ENCODE measurements at regions of chr20 and their contacts with region 1.

Region 1: DNA sequence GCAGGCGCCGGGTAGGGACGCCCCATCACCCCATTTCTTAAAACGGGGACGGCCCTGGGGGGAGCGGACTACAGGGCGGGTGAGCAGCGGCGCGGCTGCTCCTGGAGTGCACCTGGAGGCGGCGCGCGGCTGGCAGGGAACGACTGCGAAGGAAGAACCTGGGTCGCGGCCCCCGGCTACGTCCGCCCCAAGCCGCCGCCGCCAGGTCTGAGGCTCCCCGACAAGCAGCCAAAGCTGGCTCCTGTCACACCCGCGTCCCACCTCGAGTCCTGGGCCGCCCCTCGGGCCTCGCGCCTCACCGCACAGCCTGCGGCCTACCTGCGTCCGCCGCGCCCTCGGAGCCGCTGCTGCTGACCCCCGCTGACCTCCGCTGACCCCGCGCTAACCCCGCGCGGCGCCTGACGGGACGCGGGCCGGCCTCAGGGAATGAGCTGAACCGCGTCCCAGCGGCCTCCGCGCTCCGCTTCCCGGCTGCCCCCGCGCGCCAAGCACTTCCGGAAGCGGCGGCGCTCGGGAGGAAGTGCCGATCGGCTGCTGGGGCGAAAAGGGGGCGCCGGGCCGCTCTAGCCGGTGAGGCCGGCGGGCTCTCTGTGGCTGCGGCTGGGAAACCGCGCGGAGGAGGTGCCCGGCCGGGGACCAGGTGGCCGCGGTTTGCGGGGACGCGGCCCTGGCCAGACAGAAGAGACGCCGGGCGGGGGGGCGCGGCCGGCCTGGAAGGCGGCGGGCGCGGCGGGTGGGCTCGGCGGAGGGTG is at the starts of genes ARFRP1 and ZGPAT:
- DNase-seq: peak; percentile 82
- H3K4me3 Mint-ChIP-seq: peak within 1 kb of the TSS; percentile 86
- H3K27ac Mint-ChIP-seq: peak within 1 kb of the TSS; percentile 61
- H3K4me1 Mint-ChIP-seq: peaks cover 9% of the 10 kb centered on the region
- H3K27me3 Mint-ChIP-seq: no peaks in the 10 kb centered on the region
- CTCF ChIP-seq: no peak
- total RNA-seq, gene ARFRP1: 60.1 and 65.4 TPM in 2 replicates
- total RNA-seq, gene ZGPAT: 19.5 and 22.2 TPM in 2 replicates

Region 2: GRCh38 chr20:63627129-63627750 is 80.5 kb before region 1 on chr20:
- CTCF ChIA-PET with region 1: interaction called, 4 read pairs
- POLR2A ChIA-PET with region 1: interaction called, 23 read pairs
- intact Hi-C with region 1: no loop called
- DNase-seq: peak; percentile 93
- H3K4me3 Mint-ChIP-seq: peak overlapping the region; percentile 79
- H3K27ac Mint-ChIP-seq: peak overlapping the region; percentile 88
- H3K4me1 Mint-ChIP-seq: peaks cover 7% of the 10 kb centered on the region
- H3K27me3 Mint-ChIP-seq: no peaks in the 10 kb centered on the region
- CTCF ChIP-seq: no peak

Region 3: DNA sequence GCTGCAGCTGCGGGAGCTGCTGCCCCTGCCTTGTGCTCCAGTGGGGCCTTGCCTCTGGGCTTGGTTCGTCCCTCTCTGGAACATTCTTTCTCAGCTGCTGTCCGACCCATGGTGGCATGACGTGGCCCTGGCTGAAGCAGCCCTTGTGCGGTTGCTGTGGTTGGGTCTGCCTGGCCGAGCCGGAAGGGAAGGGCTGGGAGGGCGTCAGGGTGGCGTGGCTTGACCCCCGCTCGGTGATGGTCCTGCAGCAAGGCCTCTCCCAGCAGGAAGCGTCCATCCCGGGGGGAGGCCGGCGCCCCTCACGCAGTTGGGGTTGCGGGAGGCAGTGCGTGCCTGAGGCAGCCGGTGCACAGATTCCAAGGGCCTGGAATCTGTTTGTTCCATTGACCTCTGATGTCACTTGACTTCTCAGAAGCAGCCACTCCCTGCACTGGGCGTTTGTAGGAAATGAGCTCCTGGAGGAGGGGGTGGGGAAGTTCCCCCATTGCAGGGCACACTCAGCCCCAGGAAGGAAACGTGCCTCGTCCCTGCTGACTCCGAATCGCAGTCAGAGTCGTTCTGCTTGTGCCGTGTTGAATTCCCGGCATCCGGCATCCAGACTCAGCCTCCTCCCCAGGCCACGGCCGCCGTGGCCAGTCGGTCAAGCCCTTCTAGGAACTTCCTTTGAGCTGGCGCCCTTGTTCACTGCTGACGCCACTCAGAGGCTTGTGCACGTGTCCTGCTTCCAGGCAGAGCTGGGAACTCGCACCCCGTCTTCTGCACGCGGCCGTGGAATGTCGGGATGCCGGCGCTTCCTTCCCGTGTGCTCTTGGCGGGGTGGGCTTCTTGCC is 21.0 kb before region 1 on chr20:
- CTCF ChIA-PET with region 1: no interaction called
- POLR2A ChIA-PET with region 1: interaction called, 21 read pairs
- intact Hi-C with region 1: no loop called
- DNase-seq: peak; percentile 85
- H3K4me3 Mint-ChIP-seq: no peak overlapping the region
- H3K27ac Mint-ChIP-seq: no peak overlapping the region
- H3K4me1 Mint-ChIP-seq: peaks cover 12% of the 10 kb centered on the region
- H3K27me3 Mint-ChIP-seq: no peaks in the 10 kb centered on the region
- CTCF ChIP-seq: no peak

Region 4: GRCh38 chr20:63739130-63740069 is 31.7 kb after region 1 on chr20 and contains the start of gene SLC2A4RG:
- CTCF ChIA-PET with region 1: interaction called, 9 read pairs
- POLR2A ChIA-PET with region 1: interaction called, 79 read pairs
- intact Hi-C with region 1: no loop called
- DNase-seq: peak; percentile 76
- H3K4me3 Mint-ChIP-seq: peak within 1 kb of the TSS; percentile 74
- H3K27ac Mint-ChIP-seq: no peak within 1 kb of the TSS
- H3K4me1 Mint-ChIP-seq: no peaks in the 10 kb centered on the region
- H3K27me3 Mint-ChIP-seq: no peaks in the 10 kb centered on the region
- CTCF ChIP-seq: no peak
- total RNA-seq, gene SLC2A4RG: 85.0 and 105 TPM in 2 replicates

Region 5: GRCh38 chr20:63955827-63956663 is 248.3 kb after region 1 on chr20 and contains the start of gene UCKL1:
- CTCF ChIA-PET with region 1: interaction called, 4 read pairs
- POLR2A ChIA-PET with region 1: interaction called, 16 read pairs
- intact Hi-C with region 1: loop called (anchors 5 kb)
- DNase-seq: peak; percentile 81
- H3K4me3 Mint-ChIP-seq: peak within 1 kb of the TSS; percentile 74
- H3K27ac Mint-ChIP-seq: no peak within 1 kb of the TSS
- H3K4me1 Mint-ChIP-seq: peaks cover 21% of the 10 kb centered on the region
- H3K27me3 Mint-ChIP-seq: no peaks in the 10 kb centered on the region
- CTCF ChIP-seq: no peak
- total RNA-seq, gene UCKL1: 38.6 and 43.7 TPM in 2 replicates

Region 6: GRCh38 chr20:63980806-63981728 is 273.3 kb after region 1 on chr20 and contains the start of gene PRPF6:
- CTCF ChIA-PET with region 1: no interaction called
- POLR2A ChIA-PET with region 1: interaction called, 19 read pairs
- intact Hi-C with region 1: no loop called
- DNase-seq: peak; percentile 96
- H3K4me3 Mint-ChIP-seq: peak within 1 kb of the TSS; percentile 79
- H3K27ac Mint-ChIP-seq: peak within 1 kb of the TSS; percentile 92
- H3K4me1 Mint-ChIP-seq: peaks cover 30% of the 10 kb centered on the region
- H3K27me3 Mint-ChIP-seq: no peaks in the 10 kb centered on the region
- CTCF ChIP-seq: peak; percentile 77
- total RNA-seq, gene PRPF6: 70.9 and 88.5 TPM in 2 replicates

Measured in MCF 10A (cell line).